ENCODE measurements at regions of chr10 and their contacts with region 1.

Region 1: DNA sequence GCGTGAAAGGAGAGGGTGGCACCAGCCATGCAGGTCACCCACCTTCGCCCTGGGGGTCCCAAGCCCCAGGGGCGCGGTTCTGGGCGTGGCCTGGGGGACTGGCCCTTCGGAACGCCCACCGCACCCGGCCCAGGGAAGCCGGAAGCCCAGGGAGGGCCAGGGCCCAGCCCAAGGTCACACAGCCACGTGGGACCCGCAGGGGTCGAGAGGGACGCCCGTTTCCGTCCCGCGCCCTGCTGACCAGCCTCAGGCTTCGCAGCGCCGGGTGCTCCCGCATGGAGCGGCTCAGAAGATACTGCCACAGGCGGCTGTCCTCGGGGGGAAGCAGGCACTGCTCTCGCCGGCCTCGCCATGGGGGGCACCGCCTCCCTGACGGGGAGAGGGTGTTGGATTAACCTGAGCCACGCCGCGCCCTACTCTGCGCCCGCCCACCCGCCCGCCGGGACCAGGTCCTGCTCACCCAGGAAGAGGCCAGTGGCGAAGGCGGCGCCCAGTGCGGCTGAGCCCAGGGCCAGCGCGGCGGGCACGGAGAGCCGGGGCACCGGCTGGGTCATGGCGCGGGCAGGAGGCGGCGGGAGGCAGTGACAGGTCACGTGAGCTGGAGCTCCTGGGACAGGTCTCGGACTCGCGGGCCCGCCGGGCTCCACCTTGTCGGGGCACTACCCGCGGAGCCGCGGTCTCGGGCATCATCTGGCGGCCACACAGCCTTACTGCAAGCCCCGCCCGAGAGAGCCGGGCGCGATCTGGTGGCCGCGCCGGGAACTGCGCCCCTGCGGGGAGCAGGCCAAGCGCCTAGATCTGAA is at the start of gene COMTD1:
- DNase-seq: peak; percentile 96
- ATAC-seq: peak; percentile 70
- H3K4me3 Mint-ChIP-seq: peak within 1 kb of the TSS; percentile 85
- H3K27ac Mint-ChIP-seq: peak within 1 kb of the TSS; percentile 83
- H3K4me1 Mint-ChIP-seq: peaks cover 19% of the 10 kb centered on the region
- H3K27me3 Mint-ChIP-seq: no peaks in the 10 kb centered on the region
- CTCF ChIP-seq: peak; percentile 99
- total RNA-seq, gene COMTD1: 13.2 and 15.4 TPM in 2 replicates

Region 2: DNA sequence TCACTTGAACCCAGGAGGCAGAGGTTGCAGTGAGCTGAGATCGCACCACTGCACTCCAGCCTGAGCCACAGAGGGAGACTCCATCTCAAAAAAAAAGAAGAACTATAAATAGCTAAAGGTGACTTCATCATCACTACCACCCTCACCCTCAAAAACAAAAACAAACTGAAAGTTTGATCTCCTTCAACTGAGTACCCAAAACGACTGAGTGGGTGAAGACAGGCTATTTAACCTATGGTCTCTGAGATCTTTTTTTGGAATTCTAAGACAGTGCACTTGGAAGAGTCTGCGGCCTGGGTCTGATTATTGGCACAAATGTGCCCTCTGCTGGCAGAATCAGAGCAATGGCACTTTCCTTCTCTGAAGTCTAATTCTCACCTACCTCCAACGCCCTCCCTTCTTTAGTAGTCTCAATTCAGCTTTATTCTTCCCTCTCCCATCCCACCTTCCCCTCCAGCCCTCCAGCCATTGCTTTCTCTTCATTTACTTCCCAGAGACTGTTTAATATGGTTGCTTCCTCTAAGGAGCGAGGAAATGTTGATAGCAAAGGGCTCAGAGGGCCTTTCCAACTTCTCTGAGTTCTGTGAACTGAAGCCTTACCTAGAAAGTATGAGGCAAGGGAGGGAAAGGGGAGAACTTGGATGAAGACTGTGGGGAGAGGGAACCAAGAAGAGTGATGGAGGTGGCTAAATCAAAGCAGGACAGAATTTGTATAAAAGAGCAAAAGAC is 1591.4 kb before region 1 on chr10:
- CTCF ChIA-PET with region 1: no interaction called
- POLR2A ChIA-PET with region 1: no interaction called
- intact Hi-C with region 1: loop called (anchors 10 kb)
- DNase-seq: no peak
- ATAC-seq: peak; percentile 69
- H3K4me3 Mint-ChIP-seq: peak overlapping the region; percentile 65
- H3K27ac Mint-ChIP-seq: peak overlapping the region; percentile 26
- H3K4me1 Mint-ChIP-seq: peaks cover 13% of the 10 kb centered on the region
- H3K27me3 Mint-ChIP-seq: peaks cover 4% of the 10 kb centered on the region
- CTCF ChIP-seq: peak; percentile 62

Region 3: DNA sequence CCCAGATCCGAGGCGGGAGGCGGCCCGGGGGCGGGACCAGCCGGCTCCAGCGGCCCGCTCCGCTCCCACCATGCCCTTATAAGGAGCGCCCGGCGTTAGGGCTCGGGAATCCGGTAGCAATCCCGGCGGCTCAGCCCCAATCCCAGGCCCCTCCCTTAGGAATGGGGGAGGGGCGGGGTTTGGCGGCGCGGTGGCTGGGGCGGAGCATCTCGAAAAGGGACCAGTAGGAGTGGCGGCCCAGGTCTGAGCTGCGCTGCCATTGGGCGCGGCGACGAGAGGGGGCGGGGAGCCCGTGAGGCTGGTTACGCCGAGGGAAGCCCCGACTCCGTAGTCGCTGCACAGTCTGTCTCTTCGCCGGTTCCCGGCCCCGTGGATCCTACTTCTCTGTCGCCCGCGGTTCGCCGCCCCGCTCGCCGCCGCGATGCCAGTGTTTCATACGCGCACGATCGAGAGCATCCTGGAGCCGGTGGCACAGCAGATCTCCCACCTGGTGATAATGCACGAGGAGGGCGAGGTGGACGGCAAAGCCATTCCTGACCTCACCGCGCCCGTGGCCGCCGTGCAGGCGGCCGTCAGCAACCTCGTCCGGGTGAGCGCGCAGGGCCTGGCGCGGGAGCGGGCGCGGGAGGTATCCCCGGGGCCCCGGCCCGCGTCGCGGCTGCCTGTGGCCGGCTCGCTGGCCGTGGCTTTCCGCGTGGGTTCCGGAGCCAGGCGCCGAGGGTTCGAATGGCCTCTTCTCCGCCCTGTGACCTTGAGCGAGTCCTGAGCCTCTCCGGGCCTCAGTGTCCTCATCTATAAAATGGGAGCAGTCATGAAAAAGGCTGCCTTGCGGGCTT is 1237.6 kb before region 1 on chr10 and contains the start of gene VCL:
- CTCF ChIA-PET with region 1: no interaction called
- POLR2A ChIA-PET with region 1: no interaction called
- intact Hi-C with region 1: loop called (anchors 5 kb)
- DNase-seq: peak; percentile 91
- ATAC-seq: peak; percentile 97
- H3K4me3 Mint-ChIP-seq: peak within 1 kb of the TSS; percentile 96
- H3K27ac Mint-ChIP-seq: peak within 1 kb of the TSS; percentile 95
- H3K4me1 Mint-ChIP-seq: peaks cover 45% of the 10 kb centered on the region
- H3K27me3 Mint-ChIP-seq: no peaks in the 10 kb centered on the region
- CTCF ChIP-seq: no peak
- total RNA-seq, gene VCL: 21.3 and 25.8 TPM in 2 replicates

Region 4: GRCh38 chr10:74262856-74263255 is 972.7 kb before region 1 on chr10:
- CTCF ChIA-PET with region 1: interaction called, 7 read pairs
- POLR2A ChIA-PET with region 1: no interaction called
- intact Hi-C with region 1: loop called (anchors 1 kb)
- DNase-seq: no peak
- ATAC-seq: no peak
- H3K4me3 Mint-ChIP-seq: no peak overlapping the region
- H3K27ac Mint-ChIP-seq: no peak overlapping the region
- H3K4me1 Mint-ChIP-seq: peaks cover 15% of the 10 kb centered on the region
- H3K27me3 Mint-ChIP-seq: no peaks in the 10 kb centered on the region
- CTCF ChIP-seq: no peak

Region 5: DNA sequence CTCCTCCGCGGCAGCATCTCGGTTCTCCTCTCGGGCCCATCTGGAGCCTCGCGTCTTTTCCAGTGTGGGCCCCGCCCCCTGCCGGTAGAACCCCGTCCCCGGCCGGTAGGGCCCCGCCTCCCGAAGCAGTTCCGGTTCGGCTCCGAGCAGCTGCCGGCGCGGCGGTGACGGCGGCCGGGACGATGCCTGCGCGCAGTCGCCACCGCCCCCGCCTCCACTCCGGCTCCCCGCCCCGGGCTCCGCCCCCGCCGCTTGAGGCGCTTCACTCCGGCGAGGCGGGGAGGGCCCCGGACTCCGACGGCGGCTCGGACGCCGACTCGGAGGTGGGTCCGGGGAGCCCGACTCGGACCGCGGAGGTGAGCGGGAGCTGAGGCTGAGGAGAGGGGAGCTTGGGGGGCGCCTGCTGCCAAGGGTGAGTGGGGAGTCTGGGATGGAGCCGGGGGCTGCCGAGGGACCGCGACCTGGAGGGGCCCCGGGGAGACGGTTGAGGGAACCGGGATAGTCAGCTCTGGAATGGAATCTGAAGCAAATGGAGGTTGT is 124.1 kb before region 1 on chr10 and contains the start of gene SAMD8:
- CTCF ChIA-PET with region 1: interaction called, 4 read pairs
- POLR2A ChIA-PET with region 1: interaction called, 6 read pairs
- intact Hi-C with region 1: loop called (anchors 1 kb)
- DNase-seq: peak; percentile 95
- ATAC-seq: peak; percentile 81
- H3K4me3 Mint-ChIP-seq: peak within 1 kb of the TSS; percentile 90
- H3K27ac Mint-ChIP-seq: peak within 1 kb of the TSS; percentile 90
- H3K4me1 Mint-ChIP-seq: peaks cover 45% of the 10 kb centered on the region
- H3K27me3 Mint-ChIP-seq: no peaks in the 10 kb centered on the region
- CTCF ChIP-seq: no peak
- total RNA-seq, gene SAMD8: 25.8 and 29.1 TPM in 2 replicates

Region 6: GRCh38 chr10:75283671-75284470 is 48.3 kb after region 1 on chr10:
- CTCF ChIA-PET with region 1: no interaction called
- POLR2A ChIA-PET with region 1: no interaction called
- intact Hi-C with region 1: no loop called
- DNase-seq: no peak
- ATAC-seq: no peak
- H3K4me3 Mint-ChIP-seq: no peak overlapping the region
- H3K27ac Mint-ChIP-seq: no peak overlapping the region
- H3K4me1 Mint-ChIP-seq: no peaks in the 10 kb centered on the region
- H3K27me3 Mint-ChIP-seq: peaks cover 54% of the 10 kb centered on the region
- CTCF ChIP-seq: no peak